GM13977 (cell line): ENCODE measurements at regions of chr10 and their contacts with region 1.

Region 1: GRCh38 chr10:17655567-17656146 is 11.7 kb downstream of the STAM start:
- DNase-seq: peak; percentile 56
- CTCF ChIP-seq: no peak

Region 2: GRCh38 chr10:17562614-17563013 is 93.0 kb before region 1 on chr10:
- in situ Hi-C with region 1: no loop called
- DNase-seq: no peak
- CTCF ChIP-seq: no peak

Region 3: DNA sequence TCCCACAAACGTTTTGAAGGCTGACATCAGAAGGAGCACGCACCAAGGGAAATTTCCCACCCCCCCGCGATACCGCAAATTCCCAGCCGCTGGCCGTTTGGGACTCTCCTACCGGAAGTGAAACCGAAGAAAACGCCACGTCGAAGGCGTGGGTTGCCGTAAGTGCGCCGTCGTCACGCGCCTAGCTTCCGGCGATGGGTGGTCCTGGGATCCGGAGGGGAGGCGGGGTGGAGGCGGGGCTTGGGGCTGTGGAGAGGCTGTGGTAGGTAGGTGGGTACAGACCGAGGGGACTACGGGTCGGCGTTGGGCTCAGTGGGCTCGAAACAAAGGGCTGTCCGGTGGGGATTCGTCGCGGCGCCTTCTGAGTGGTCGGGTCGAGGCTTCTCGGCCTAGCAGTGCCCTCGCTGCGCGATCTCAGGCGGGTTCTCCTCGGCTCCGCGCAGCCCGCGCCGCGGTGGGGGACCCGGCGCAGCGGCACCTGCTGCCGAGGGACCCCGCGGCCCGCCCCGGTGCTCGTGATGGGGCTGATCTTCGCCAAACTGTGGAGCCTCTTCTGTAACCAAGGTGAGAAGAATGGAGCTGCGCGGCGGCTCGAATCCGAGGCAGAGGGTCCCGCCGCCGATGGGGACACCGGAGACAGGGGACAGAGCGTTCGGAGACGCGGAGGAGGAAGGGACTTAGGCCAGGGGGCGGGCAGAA is 1003.6 kb after region 1 on chr10 and contains the start of gene ARL5B:
- in situ Hi-C with region 1: loop called (anchors 25 kb)
- DNase-seq: peak; percentile 94
- CTCF ChIP-seq: no peak